ENCODE measurements at regions of chr1 and their contacts with region 1.

Region 1: DNA sequence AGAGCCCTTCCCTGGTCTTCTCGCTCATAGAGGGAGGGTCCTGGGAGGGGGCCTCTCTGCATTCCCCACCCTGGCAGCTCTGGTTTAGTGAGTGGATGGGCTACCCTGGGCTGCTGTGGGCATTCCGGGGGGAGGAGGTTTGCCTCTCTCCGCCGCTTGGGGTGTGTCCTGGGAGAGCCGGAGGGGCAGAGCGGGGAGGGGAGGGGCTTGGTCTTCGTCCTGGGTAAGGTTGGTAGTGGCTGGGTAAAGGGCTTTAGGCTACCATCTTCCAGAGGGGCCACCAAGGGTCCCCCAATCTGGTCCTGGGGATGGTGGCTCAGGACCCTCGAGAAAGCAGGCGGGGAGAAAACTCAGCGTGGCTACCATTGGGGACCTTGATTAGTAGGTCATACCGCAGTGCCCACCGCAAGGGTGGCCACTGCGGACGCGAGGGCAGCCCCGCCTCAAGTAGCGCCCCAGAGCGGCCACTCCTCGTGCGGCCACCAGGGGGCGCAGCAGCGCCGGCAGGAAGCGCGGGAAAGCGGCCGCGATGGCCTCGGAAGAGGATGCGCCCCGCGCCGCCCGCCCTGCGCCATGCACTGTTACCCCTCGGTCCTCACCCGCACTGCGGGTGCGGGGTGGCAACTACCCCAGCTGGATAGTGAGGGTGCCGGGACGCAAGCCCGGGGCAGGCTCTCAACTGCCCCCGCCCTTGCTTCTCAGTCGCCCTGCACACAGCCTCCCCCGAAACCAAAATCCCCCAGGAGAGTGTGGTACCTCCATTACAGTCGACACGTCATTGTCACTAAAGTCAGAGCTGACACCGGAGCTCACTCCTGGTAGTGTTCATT is 44.1 kb upstream of the SLC25A33 start:
- DNase-seq: peak; percentile 83
- CTCF ChIP-seq: peak; percentile 91

Region 2: GRCh38 chr1:9270290-9270883 is 224.8 kb before region 1 on chr1:
- CTCF ChIA-PET with region 1: interaction called, 27 read pairs
- POLR2A ChIA-PET with region 1: interaction called, 3 read pairs
- DNase-seq: no peak
- CTCF ChIP-seq: no peak

Region 3: DNA sequence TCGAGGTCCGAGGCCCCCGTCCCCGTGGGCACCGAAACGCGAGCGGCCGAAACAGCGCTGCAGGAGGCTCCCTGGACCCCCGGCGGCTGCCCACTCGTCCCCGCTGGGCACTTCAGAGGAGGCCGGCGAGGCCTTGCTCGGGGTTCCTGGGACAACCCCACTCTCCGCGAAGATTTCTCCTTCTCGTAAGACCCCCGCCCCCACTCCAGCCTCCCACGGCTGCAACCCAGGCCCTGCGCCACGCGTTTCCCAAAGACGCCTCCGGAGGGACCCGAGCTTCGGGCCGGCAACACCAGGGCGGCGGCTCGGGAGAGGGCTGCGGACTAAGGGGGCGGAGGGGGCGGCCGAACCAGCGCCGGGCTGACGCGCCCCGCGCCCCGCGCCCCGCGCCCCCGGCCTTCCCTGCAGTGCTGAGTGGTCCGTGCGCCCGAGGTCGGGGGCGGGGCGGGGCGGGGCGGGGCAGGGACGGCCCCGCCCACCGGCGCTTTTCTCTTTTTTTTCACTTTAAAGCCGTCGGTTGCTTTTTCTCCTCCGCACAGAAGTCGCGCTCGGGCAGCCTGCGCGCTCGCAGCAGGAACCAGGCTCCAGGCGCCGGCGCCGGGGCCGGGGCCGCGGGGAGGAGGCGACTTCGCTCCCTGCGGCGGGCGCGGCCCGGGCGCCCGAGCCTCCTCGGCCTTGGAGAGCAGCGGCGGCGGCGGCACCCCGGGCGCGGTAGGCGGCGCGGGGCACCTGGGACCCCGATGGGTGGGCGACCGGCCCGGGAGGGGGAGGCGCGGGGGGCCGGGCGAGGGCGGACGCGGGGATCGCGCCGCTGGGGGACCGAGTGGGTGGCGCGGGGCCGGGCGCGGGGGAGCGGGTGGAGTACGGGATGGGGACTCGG is 202.5 kb before region 1 on chr1 and contains the start of gene SPSB1:
- CTCF ChIA-PET with region 1: interaction called, 82 read pairs
- POLR2A ChIA-PET with region 1: no interaction called
- DNase-seq: peak; percentile 81
- CTCF ChIP-seq: no peak

Region 4: DNA sequence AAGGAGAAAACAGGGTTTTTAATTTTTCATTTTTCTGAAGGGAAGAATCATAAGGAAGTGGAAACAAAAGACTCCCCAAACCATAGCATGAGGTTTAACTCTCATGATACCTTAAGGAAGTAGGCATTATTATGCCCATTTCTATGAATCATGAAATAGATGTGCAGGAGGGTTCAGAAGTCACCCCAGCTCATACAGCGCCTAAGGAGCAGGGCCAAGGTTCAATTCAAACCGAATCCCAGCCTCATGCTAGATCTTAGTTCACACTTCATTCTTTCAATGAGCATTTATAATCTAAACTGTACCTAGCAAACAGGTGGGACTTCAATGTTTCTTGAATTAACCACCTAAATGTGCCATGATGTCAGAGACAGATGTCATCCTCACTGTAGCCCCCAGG is 67.8 kb before region 1 on chr1:
- CTCF ChIA-PET with region 1: no interaction called
- POLR2A ChIA-PET with region 1: no interaction called
- DNase-seq: no peak
- CTCF ChIP-seq: no peak

Region 5: DNA sequence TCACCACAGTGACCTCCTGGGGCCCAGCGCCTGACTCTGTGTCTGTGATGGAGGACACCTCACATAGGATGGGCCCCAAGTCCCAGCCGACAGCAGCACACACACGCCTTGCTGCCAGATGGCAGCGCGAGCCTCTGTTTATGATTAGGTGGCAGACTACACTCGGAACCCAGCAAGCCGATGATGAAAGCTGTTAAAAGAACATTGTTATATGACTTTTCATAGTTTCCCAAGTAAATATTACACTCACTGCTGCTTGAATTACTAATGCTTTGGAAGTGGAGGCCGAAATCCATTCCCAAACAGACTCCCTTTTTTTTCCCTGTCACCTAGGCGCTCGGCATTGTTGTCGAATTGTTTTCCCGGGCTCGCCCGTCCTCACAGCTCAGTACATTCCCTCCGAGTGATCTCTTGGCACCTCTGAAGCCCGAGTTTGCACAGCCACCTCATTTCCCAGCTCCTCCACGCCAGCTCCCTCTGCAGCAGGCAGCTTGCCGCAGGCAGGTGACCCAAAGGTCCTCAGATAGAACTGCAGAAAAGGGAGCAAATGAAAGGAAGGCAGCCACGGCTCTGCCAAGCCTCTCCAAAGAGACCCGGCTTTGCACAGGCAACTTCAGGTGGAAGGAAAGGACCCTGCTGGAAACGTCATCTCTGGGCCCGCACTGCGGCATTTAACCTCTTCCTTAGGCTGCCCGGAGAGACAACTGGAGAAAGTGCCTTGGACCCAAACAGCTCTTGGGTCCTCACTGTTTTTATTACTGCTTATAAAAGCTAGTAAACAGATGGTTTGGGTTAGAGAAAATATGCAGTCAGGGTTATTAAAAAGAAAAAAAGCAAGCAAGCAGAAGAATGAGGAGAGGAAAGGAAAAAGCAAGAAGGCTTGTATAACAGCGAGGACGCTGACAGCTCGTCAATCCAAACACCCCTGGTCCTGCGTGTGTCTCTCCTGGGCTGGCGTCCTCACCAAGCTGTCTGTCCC is 28.1 kb before region 1 on chr1:
- CTCF ChIA-PET with region 1: interaction called, 11 read pairs
- POLR2A ChIA-PET with region 1: no interaction called
- DNase-seq: no peak
- CTCF ChIP-seq: no peak

Region 6: GRCh38 chr1:9506901-9507300 is 11.8 kb after region 1 on chr1:
- CTCF ChIA-PET with region 1: interaction called, 14 read pairs
- POLR2A ChIA-PET with region 1: no interaction called
- DNase-seq: no peak
- CTCF ChIP-seq: no peak

Region 7: DNA sequence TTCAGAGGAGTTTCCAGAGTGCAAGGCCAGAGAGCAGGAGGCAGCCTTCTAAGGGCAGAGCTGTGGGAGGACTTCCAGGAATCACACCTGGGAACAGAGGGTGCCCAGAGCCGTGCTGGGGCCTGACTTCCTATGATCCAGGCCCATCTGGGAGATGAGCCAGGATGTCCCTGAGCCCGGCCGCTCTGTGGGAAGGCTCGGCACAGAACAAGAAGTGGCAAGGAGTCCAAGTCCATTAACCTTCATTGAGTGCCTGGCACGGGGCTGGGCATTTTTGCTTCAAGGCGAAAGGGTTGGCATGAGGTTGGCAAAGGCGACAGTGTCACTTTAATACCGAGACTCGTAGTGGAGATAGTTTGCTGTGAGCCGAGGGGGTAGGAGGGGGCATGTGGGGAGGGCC is 111.8 kb after region 1 on chr1:
- CTCF ChIA-PET with region 1: no interaction called
- POLR2A ChIA-PET with region 1: no interaction called
- DNase-seq: no peak
- CTCF ChIP-seq: no peak